Breast epithelium (tissue), 4 donors: ENCODE measurements at regions of chr15 and their contacts with region 1.

Region 1: GRCh38 chr15:93278006-93278405 is 189.0 kb upstream of the RGMA start:
- DNase-seq: no peak
- H3K4me3 ChIP-seq: no peak overlapping the region
- H3K27ac ChIP-seq: no peak overlapping the region
- H3K4me1 ChIP-seq: no peaks in the 10 kb centered on the region
- H3K27me3 ChIP-seq: no peaks in the 10 kb centered on the region
- CTCF ChIP-seq: no peak
- POLR2A ChIP-seq: no peak

Region 2: DNA sequence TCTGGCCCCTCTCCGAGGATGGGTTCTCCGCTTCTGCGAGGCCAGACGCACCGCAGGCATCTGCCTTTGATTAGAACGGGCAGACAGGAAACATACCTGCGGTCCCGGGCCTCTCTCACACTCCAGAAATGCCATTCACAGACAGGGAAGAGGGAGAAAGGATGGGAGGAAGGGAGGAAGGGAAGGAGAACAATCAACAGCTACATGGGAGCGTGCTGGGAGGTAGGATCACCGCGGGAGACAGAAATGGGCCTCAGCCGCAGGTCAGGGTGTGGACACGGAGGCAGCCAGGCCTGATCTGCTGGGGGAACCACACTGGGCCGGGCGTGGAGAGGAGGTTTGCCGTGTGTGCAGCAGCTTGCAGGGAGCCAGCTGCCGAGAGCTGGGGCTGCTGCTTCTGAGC is 98.3 kb before region 1 on chr15:
- intact Hi-C with region 1: loop called (anchors 5 kb)
- DNase-seq: no peak
- H3K4me3 ChIP-seq: no peak overlapping the region
- H3K27ac ChIP-seq: no peak overlapping the region
- H3K4me1 ChIP-seq: no peaks in the 10 kb centered on the region
- H3K27me3 ChIP-seq: no peaks in the 10 kb centered on the region
- CTCF ChIP-seq: no peak
- POLR2A ChIP-seq: no peak